Endothelial cell of umbilical vein (primary cell): ENCODE measurements at regions of chr3 and their contacts with region 1.

Region 1: GRCh38 chr3:190701096-190701532 is 161.4 kb downstream of the GMNC start:
- DNase-seq: peak; percentile 37
- H3K4me3 ChIP-seq: no peak overlapping the region
- H3K27ac ChIP-seq: no peak overlapping the region
- H3K4me1 ChIP-seq: no peaks in the 10 kb centered on the region
- H3K27me3 ChIP-seq: peaks cover 0 to 2% of the 10 kb centered on the region in 2 experiments
- CTCF ChIP-seq: peak; percentile 24 to 46
- POLR2A ChIP-seq: no peak

Region 2: DNA sequence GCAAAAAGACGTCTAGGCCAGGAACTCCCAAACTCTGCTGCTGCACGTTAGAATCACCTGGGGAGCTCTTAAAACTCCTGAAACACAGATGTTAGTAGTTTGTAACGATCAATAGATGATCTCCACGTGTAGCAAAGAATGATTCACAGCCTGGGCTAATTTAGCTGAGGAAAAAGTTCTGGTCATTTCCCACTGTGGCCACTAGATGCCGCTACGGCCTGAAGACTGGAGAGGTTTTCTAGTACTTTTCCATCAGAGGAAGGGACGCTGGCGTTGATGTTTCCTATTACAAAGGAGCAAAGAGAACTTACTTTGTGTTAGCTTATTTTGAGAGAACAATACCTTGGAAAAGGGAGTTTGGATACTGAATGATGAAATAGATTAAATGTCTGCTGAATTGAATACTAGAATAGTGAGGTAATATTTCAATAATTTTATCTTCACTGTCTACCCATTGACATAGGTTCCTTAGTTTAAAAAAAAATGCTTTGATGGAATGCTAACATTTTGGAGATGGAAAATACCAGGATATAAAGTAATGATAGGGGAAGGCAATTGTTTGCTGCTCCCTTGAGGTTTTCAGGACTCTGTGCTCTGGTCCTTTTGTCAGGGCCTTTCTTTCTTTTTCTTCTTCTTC is 739.5 kb before region 1 on chr3:
- CTCF ChIA-PET with region 1: interaction called, 63 read pairs
- POLR2A ChIA-PET with region 1: no interaction called
- dilution Hi-C with region 1: no loop called
- intact Hi-C with region 1: loop called (anchors 1 kb)
- DNase-seq: peak; percentile 89
- H3K4me3 ChIP-seq: no peak overlapping the region
- H3K27ac ChIP-seq: no peak overlapping the region
- H3K4me1 ChIP-seq: no peaks in the 10 kb centered on the region
- H3K27me3 ChIP-seq: no peaks in the 10 kb centered on the region
- CTCF ChIP-seq: peak; percentile 77 to 90
- POLR2A ChIP-seq: no peak

Region 3: GRCh38 chr3:190224863-190225692 is 476.0 kb before region 1 on chr3:
- CTCF ChIA-PET with region 1: interaction called, 22 read pairs
- POLR2A ChIA-PET with region 1: no interaction called
- dilution Hi-C with region 1: no loop called
- intact Hi-C with region 1: loop called (anchors 1 kb)
- DNase-seq: peak; percentile 58
- H3K4me3 ChIP-seq: no peak overlapping the region
- H3K27ac ChIP-seq: no peak overlapping the region
- H3K4me1 ChIP-seq: peaks cover 10% of the 10 kb centered on the region
- H3K27me3 ChIP-seq: no peaks in the 10 kb centered on the region
- CTCF ChIP-seq: peak; percentile 20 to 24
- POLR2A ChIP-seq: no peak

Region 4: DNA sequence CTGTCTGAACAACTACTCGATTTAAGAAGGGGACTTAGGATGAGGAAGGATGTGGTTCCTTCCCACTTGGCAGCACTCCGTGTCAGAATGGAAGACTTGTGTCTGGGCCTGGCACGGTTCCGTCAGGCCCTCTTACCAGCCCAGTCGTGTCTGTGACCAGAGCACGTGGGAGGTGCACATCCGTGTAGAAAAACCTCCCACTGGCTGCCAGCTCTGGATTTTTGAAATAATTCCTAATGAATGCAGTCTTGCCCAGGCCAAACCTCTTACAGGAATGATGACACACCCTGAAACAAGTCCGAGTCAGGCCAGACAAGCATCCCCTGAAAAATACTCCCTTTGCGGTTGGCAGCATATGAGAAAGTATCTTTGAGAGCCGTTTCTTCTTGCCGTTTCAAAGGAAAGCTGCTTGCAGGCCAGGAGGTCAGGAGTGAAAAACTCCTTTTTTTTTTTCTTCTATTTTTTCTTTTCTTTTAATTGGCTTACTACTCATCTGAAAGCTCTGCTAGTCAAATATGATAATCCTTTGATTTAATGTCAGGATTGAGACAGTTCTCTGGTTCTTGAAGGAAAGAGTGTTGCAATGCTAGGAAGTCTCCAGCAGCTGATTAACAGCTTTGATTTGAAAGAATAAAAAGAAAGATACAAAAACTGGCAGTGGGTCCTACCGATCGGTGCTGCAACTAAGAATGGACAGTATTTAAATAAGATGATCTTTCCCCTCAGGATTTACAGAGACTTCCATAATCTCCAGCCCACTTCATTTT is 167.4 kb before region 1 on chr3:
- CTCF ChIA-PET with region 1: interaction called, 12 read pairs
- POLR2A ChIA-PET with region 1: no interaction called
- dilution Hi-C with region 1: no loop called
- intact Hi-C with region 1: no loop called
- DNase-seq: peak; percentile 56
- H3K4me3 ChIP-seq: no peak overlapping the region
- H3K27ac ChIP-seq: no peak overlapping the region
- H3K4me1 ChIP-seq: peaks cover 11% of the 10 kb centered on the region
- H3K27me3 ChIP-seq: no peaks in the 10 kb centered on the region
- CTCF ChIP-seq: no peak
- POLR2A ChIP-seq: no peak

Region 5: DNA sequence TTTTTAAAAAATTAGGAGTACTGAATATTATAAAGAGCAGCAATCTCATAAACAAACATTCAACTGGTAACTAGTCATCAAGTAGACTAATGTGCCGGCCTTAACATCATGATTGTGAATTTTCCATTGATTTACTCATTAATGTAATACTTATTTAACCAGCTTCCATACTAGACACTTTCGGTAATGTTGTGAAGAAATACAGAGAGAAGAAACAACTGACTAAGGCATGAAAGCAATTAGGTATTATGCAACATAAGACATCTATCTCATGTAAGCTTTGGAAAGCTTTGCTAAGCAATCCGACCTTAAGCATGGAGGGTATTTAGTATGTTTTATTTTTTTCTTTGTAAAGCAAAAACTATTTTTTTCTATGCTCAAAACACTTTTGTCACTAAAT is 79.2 kb before region 1 on chr3:
- CTCF ChIA-PET with region 1: no interaction called
- POLR2A ChIA-PET with region 1: no interaction called
- dilution Hi-C with region 1: no loop called
- intact Hi-C with region 1: no loop called
- DNase-seq: no peak
- H3K4me3 ChIP-seq: no peak overlapping the region
- H3K27ac ChIP-seq: no peak overlapping the region
- H3K4me1 ChIP-seq: peaks cover 7% of the 10 kb centered on the region
- H3K27me3 ChIP-seq: no peaks in the 10 kb centered on the region
- CTCF ChIP-seq: no peak
- POLR2A ChIP-seq: no peak